MCF 10A (cell line): ENCODE measurements at regions of chr1 and their contacts with region 1.

Region 1: DNA sequence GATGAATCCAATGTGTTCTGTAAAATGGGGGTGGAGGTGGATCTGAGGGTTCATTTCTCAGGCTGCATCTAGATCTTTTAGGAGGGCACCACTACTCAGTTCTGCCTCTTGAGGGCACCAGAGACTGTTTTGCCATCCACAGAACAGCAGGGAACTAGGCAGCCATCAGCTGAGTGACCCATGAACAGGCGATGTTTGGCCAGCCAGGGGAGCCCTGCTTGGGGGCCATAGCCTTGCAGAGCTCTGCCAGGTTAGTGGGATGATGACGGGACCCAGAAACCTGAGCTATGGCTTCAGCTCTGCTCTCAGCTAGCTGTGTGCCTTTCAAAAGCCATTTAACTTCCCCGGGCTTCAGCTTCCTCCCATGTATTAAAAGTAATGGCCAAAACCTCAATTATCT is 13.4 kb upstream of the NOS1AP start:
- DNase-seq: peak; percentile 85
- H3K4me3 Mint-ChIP-seq: no peak overlapping the region
- H3K27ac Mint-ChIP-seq: no peak overlapping the region
- H3K4me1 Mint-ChIP-seq: peaks cover 14% of the 10 kb centered on the region
- H3K27me3 Mint-ChIP-seq: no peaks in the 10 kb centered on the region
- CTCF ChIP-seq: peak; percentile 99

Region 2: DNA sequence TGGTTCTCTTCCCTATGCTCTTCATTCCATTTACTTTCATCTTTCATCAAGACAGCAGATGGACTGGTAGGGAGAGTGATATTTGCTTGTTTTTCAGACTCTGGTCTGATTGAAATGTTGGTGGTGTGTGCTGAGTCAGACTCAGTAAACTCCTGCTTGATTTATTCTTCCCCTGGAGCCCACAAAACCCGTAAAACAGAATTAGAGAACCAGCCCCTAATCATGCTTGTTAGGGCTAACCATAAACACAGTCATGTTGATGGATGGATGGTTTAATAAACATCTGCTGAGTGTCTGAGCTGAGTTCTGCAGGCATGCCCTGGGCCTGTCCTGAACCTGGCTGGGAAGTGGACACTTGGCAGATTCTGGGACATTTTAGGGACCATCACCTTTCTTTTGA is 38.2 kb after region 1 on chr1:
- CTCF ChIA-PET with region 1: interaction called, 11 read pairs
- POLR2A ChIA-PET with region 1: no interaction called
- intact Hi-C with region 1: no loop called
- DNase-seq: no peak
- H3K4me3 Mint-ChIP-seq: no peak overlapping the region
- H3K27ac Mint-ChIP-seq: no peak overlapping the region
- H3K4me1 Mint-ChIP-seq: peaks cover 5% of the 10 kb centered on the region
- H3K27me3 Mint-ChIP-seq: no peaks in the 10 kb centered on the region
- CTCF ChIP-seq: no peak

Region 3: DNA sequence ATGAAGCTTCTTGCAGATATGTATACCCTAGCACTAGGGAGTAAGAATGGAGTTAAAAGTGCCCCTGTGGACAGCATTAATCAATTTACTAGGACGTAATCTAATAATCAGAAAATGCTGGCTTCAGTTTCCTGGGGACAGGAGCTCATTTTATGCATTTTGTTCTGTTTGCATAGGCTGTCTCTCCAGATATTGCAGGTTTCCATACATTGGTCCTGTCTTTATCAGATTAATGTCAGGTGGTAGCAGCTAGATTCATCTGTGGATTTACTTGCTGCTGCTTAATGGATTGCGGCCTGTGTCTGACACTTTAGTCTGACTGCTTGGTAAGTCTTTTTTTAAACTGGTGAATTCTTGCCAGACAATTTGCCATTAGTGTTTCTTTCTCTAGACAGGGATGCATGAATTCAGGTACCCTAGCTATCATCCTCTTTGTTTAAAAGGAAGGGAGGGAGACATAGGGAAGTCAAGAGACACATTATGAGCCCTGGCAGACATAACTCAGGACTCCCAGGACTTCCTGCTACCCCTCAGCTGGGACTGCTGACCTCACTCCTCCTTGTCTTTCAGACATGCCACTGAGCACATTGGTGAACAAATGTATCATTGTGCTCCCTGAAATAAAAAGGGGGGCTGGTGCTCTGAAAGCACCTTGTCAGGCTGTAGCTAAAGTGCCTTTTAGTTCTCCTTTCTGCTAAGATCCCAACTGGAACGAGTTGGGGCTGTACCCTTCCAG is 61.2 kb after region 1 on chr1:
- CTCF ChIA-PET with region 1: no interaction called
- POLR2A ChIA-PET with region 1: no interaction called
- intact Hi-C with region 1: no loop called
- DNase-seq: no peak
- H3K4me3 Mint-ChIP-seq: no peak overlapping the region
- H3K27ac Mint-ChIP-seq: no peak overlapping the region
- H3K4me1 Mint-ChIP-seq: no peaks in the 10 kb centered on the region
- H3K27me3 Mint-ChIP-seq: no peaks in the 10 kb centered on the region
- CTCF ChIP-seq: no peak

Region 4: GRCh38 chr1:162265983-162266382 is 209.9 kb after region 1 on chr1:
- CTCF ChIA-PET with region 1: interaction called, 98 read pairs
- POLR2A ChIA-PET with region 1: no interaction called
- intact Hi-C with region 1: no loop called
- DNase-seq: no peak
- H3K4me3 Mint-ChIP-seq: no peak overlapping the region
- H3K27ac Mint-ChIP-seq: no peak overlapping the region
- H3K4me1 Mint-ChIP-seq: no peaks in the 10 kb centered on the region
- H3K27me3 Mint-ChIP-seq: peaks cover 13% of the 10 kb centered on the region
- CTCF ChIP-seq: no peak

Region 5: GRCh38 chr1:162349635-162350330 is 293.7 kb after region 1 on chr1:
- CTCF ChIA-PET with region 1: interaction called, 14 read pairs
- POLR2A ChIA-PET with region 1: no interaction called
- intact Hi-C with region 1: no loop called
- DNase-seq: peak; percentile 81
- H3K4me3 Mint-ChIP-seq: peak overlapping the region; percentile 26
- H3K27ac Mint-ChIP-seq: peak overlapping the region; percentile 95
- H3K4me1 Mint-ChIP-seq: peaks cover 29% of the 10 kb centered on the region
- H3K27me3 Mint-ChIP-seq: no peaks in the 10 kb centered on the region
- CTCF ChIP-seq: no peak

Region 6: GRCh38 chr1:162391790-162392563 is 335.9 kb after region 1 on chr1:
- CTCF ChIA-PET with region 1: interaction called, 171 read pairs
- POLR2A ChIA-PET with region 1: interaction called, 4 read pairs
- intact Hi-C with region 1: loop called (anchors 1 kb)
- DNase-seq: peak; percentile 72
- H3K4me3 Mint-ChIP-seq: no peak overlapping the region
- H3K27ac Mint-ChIP-seq: no peak overlapping the region
- H3K4me1 Mint-ChIP-seq: peaks cover 37% of the 10 kb centered on the region
- H3K27me3 Mint-ChIP-seq: peaks cover 13% of the 10 kb centered on the region
- CTCF ChIP-seq: peak; percentile 93